Activated T-helper 1 cell treated with anti-CD3 and anti-CD28 coated beads, Interleukin-12 subunit alpha, Interleukin-12 subunit beta, Interleukin-2, Interleukin-4 antibody, amounts not matched to agents 30 ng/mL and 10 ng/mL and 1 ng/mL, durations not matched to agents 14 hours and 24 hours and 36 hours (primary cell): ENCODE measurements at regions of chr4 and their contacts with region 1.

Region 1: DNA sequence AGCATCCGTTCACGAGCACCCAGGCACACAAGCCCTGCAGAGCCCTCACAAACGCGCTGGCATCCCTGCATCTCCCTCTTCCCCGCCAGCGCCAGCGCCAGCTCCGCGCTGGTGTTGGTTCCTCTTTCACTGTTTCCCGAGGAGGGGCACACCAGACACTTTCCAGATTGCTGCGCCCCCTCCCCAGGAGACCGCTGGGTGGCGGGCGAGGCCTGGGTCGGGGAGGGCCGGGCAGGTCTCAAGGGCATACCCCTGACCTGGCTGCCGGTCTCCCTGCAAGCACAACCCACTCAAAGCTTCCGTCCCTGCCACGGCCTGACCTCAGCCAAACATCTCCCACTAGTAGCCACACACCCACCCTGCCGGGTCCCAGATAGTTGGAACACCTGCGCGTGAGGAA is 2.2 kb upstream of the NKX1-1 start:
- DNase-seq: no peak
- H3K4me3 Mint-ChIP-seq: no peak overlapping the region
- H3K27ac Mint-ChIP-seq: peak overlapping the region; percentile 84
- H3K4me1 Mint-ChIP-seq: no peaks in the 10 kb centered on the region
- H3K27me3 Mint-ChIP-seq: peaks cover 32% of the 10 kb centered on the region

Region 2: GRCh38 chr4:575281-576141 is 832.9 kb before region 1 on chr4:
- intact Hi-C with region 1: loop called (anchors 5 kb)
- DNase-seq: no peak
- H3K4me3 Mint-ChIP-seq: no peak overlapping the region
- H3K27ac Mint-ChIP-seq: no peak overlapping the region
- H3K4me1 Mint-ChIP-seq: peaks cover 4% of the 10 kb centered on the region
- H3K27me3 Mint-ChIP-seq: peaks cover 41% of the 10 kb centered on the region